CD8-positive, alpha-beta T cell (primary cell): ENCODE measurements at regions of chr10 and their contacts with region 1.

Region 1: DNA sequence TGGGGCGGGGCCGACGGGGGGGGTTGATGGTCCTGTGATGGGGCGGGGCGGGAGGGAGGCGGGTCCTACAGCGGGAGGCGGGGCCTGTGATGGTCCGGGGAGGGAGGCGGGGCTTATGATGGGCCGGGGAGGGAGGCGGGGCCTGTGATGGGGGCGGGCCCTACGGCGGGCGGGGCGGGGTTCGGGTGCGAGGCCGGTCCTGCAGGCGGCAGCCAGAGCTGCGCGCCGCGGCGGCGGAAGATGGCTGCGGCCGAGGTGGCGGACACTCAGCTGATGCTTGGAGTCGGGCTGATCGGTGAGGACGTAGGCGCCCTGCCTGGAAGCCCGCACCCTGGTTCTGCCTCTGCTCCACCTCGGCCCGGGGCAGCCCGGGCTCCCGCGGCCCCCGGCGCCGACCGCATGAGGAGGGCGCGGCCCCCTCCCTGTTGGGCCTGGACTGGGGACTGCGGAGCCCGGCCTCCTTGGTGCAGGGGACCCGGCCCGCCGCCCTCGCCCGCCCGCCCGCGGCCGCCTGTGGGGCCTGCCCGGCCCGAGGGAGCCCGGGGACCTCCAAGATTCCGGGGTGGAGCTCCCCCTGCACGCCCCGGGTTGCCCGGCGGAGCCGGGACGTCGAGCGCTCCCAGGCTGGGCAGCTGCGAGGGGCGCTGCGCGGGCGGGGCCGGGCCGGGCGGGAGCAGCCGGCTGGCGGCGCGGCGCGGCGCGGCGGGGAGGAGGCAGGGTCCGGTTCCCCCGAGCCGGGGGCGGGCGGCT is at the start of gene DENND10:
- DNase-seq: peak; percentile 55 to 88 (median 78)
- ATAC-seq: peak; percentile 85
- H3K4me3 ChIP-seq: peak within 1 kb of the TSS; percentile 46 to 49
- H3K4me3 Mint-ChIP-seq: peak within 1 kb of the TSS; percentile 90
- H3K27ac ChIP-seq: peak within 1 kb of the TSS; percentile 37 to 59
- H3K27ac Mint-ChIP-seq: peak within 1 kb of the TSS; percentile 93
- H3K4me1 ChIP-seq: peaks cover 4% of the 10 kb centered on the region
- H3K4me1 Mint-ChIP-seq: peaks cover 20% of the 10 kb centered on the region
- H3K27me3 ChIP-seq: no peaks in the 10 kb centered on the region
- H3K27me3 Mint-ChIP-seq: no peaks in the 10 kb centered on the region
- CTCF ChIP-seq: no peak
- total RNA-seq, gene DENND10: 28.8 to 30.5 TPM

Region 2: DNA sequence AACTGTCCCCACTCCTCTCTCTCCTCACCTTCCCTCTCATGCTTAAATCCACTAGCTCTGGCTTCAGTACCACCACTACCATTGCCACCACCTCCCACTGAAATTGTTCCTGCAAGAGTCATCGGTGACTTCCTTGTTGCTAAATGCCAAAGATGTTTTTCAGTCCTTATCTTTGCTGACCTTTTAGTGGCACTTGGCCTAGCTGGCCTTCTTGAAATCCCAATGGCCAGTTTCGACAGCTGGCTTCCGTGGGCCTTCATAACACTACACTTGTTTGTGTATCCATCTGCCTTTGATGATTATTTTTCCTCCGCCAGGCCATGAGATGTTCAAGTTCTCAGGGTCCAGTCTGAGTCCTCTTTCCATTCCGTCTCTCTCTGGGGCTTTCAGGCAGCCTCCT is 192.7 kb before region 1 on chr10:
- CTCF ChIA-PET with region 1: no interaction called
- POLR2A ChIA-PET with region 1: no interaction called
- intact Hi-C with region 1: no loop called
- DNase-seq: no peak
- ATAC-seq: no peak
- H3K4me3 ChIP-seq: no peak overlapping the region
- H3K4me3 Mint-ChIP-seq: no peak overlapping the region
- H3K27ac ChIP-seq: no peak overlapping the region
- H3K27ac Mint-ChIP-seq: no peak overlapping the region
- H3K4me1 ChIP-seq: no peaks in the 10 kb centered on the region
- H3K4me1 Mint-ChIP-seq: no peaks in the 10 kb centered on the region
- H3K27me3 ChIP-seq: no peaks in the 10 kb centered on the region
- H3K27me3 Mint-ChIP-seq: peaks cover 5% of the 10 kb centered on the region
- CTCF ChIP-seq: no peak

Region 3: DNA sequence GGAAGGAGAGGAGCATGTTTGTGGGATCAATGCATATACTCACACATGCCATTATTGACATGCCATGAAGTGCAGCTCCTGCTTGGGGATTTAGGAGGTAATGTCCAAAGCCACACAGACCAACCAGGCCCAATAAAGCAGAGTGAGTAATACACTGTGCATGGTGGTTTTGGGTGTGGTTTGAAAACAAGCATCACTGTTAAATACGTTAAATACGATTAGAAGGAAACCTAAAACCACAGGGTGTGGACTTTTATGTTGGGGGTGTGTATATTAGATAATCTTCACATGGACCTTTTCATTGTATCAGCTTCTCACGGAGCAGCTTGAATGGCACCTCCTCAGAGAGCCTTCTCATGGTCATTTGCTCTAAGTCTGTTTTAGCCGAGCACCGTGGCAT is 13.1 kb before region 1 on chr10:
- CTCF ChIA-PET with region 1: interaction called, 5 read pairs
- POLR2A ChIA-PET with region 1: interaction called, 6 read pairs
- intact Hi-C with region 1: loop called in 1 of 2 experiments (anchors 1 kb)
- DNase-seq: peak; percentile 12 to 88 (median 47)
- ATAC-seq: peak; percentile 81
- H3K4me3 ChIP-seq: no peak overlapping the region
- H3K4me3 Mint-ChIP-seq: peak overlapping the region; percentile 54
- H3K27ac ChIP-seq: peak overlapping the region; percentile 51 to 55
- H3K27ac Mint-ChIP-seq: peak overlapping the region; percentile 95
- H3K4me1 ChIP-seq: peaks cover 18% of the 10 kb centered on the region
- H3K4me1 Mint-ChIP-seq: peaks cover 31% of the 10 kb centered on the region
- H3K27me3 ChIP-seq: no peaks in the 10 kb centered on the region
- H3K27me3 Mint-ChIP-seq: no peaks in the 10 kb centered on the region
- CTCF ChIP-seq: no peak

Region 4: GRCh38 chr10:119320981-119321380 is 216.9 kb after region 1 on chr10:
- CTCF ChIA-PET with region 1: no interaction called
- POLR2A ChIA-PET with region 1: no interaction called
- intact Hi-C with region 1: no loop called
- DNase-seq: no peak
- ATAC-seq: no peak
- H3K4me3 ChIP-seq: no peak overlapping the region
- H3K4me3 Mint-ChIP-seq: no peak overlapping the region
- H3K27ac ChIP-seq: no peak overlapping the region
- H3K27ac Mint-ChIP-seq: no peak overlapping the region
- H3K4me1 ChIP-seq: no peaks in the 10 kb centered on the region
- H3K4me1 Mint-ChIP-seq: peaks cover 20% of the 10 kb centered on the region
- H3K27me3 ChIP-seq: no peaks in the 10 kb centered on the region
- H3K27me3 Mint-ChIP-seq: no peaks in the 10 kb centered on the region
- CTCF ChIP-seq: no peak